ENCODE measurements at regions of chr9 and their contacts with region 1.

Region 1: DNA sequence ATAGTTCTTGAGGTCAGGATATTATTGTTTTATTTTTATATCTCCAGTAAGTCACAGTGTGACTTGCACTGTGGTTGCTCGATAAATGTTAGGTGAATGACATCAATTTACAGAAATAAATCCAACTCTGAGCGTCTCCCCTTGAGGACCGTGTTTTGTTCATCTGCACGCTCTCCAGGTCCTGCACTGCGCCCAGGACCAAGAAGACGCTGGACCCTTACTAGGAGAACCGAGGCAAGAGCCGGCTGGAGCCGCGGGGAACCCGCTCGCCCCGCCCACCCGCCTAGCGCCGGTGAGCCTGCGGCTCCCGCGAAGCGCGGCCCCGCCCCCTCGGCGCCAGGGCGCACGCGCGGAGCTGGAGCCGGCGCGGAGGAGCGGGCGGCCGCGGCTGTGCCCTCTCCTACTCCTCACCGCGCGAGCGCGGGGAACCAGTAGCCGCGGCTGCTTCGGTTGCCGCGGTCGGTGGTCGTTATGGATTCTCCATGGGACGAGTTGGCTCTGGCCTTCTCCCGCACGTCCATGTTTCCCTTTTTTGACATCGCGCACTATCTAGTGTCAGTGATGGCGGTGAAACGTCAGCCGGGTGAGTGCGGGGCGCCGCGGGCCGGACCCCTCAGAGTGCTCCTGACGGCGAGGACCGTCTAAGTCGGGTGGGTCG is at the start of gene TMEM38B:
- DNase-seq: peak; percentile 77
- H3K4me3 Mint-ChIP-seq: peak within 1 kb of the TSS; percentile 87
- H3K27ac Mint-ChIP-seq: peak within 1 kb of the TSS; percentile 61
- H3K4me1 Mint-ChIP-seq: peaks cover 26% of the 10 kb centered on the region
- H3K27me3 Mint-ChIP-seq: peaks cover 24% of the 10 kb centered on the region
- total RNA-seq, gene TMEM38B: 11.9 and 13.8 TPM in 2 replicates

Region 2: DNA sequence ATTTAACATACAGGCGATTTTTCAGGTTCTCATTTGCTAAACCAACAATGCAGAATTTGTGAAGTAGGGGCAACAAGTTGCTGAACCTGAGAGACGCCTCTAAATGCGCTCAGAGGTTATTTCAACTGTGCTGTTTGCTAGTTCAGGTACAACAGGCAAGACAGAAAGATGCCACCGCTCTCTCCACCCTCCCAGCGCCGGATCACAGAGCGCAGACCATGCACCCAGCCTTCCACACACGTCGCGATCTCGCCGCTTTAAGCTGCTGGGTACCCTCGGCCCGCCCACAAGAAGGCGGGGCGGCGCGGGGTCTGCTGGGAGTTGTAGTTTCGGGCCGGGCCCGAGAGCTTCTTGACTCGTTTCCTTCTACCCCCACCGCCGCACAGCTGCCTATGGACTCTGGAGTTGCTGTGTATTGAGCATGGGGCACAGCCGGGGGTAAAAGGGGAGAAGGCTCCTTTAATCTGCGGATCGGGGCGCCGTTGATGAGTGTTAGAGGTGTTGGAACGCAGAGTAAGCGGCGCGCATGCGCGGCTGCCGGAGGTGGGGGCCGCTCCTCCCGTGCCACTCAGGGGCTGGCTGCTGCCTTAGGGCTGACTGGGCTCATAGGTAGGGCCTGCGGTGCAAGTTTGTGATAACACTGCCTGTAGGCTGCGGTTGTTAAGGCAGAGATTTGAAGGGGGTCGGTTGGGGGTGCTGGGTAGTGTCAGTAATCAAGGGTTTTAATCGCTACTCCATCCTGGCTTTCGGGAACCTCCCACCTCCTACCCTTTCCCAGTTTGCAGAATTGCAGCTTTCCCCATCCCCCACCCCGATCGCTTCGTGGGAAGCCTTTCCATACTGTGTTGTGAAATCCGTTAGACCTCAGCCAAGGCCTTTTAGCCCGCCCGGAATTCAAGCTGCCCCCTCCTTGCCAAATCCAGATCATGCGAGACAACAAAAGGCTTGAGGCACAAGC is 726.0 kb before region 1 on chr9:
- intact Hi-C with region 1: loop called (anchors 10 kb)
- DNase-seq: peak; percentile 84
- H3K4me3 Mint-ChIP-seq: peak overlapping the region; percentile 92
- H3K27ac Mint-ChIP-seq: peak overlapping the region; percentile 66
- H3K4me1 Mint-ChIP-seq: peaks cover 13% of the 10 kb centered on the region
- H3K27me3 Mint-ChIP-seq: peaks cover 21% of the 10 kb centered on the region

Region 3: DNA sequence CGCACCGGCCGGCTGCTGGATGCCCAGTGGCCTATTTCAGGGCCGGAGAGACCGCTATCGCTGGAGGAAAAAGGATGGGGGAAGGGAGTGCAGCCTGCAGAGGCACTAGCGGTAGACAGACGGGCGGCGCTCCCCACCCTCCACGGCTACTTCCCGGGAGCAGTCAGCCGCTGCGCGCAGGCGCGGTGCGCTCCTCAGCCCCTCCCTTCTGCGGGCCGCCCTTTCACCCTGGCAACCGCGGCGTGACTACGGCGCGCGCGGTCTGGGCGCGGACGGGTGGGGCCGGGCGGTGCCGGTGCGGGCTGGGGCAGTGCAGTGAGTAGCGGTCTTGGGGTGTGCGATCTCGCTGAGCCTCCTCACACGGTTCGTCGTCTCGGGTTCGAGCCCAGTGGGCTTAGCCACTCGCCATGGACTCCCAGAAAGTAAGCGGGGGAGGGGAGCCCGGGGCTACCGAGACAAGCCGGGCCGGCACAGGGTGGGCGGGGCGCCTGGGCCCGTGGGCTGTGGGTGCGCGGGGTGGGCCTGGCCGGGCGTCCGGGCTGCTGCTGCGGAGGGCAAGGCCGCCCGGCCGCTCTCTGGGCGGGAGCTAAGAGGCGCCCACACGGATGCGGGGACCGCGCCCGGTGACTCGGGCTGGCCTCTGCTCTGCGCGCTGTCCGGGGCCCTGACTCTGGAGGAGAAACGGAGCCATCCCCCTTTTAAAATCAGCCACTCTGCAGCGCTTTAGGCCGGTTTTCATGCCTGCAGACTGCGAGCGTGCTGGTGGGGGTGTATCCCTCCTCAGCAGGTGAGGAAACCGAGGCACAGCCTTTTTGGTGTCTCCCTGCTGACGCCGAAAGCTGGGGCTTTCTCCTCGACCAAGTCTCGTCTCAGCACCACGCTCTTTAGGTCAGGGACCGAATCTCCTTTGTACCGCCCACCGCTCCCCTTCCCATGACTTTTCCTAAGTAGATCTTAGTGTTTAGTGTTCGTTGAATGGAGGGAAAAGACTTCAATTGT is 246.2 kb before region 1 on chr9 and contains the start of gene FSD1L:
- intact Hi-C with region 1: loop called (anchors 1 kb)
- DNase-seq: peak; percentile 80
- H3K4me3 Mint-ChIP-seq: peak within 1 kb of the TSS; percentile 87
- H3K27ac Mint-ChIP-seq: peak within 1 kb of the TSS; percentile 75
- H3K4me1 Mint-ChIP-seq: peaks cover 17% of the 10 kb centered on the region
- H3K27me3 Mint-ChIP-seq: peaks cover 9% of the 10 kb centered on the region
- total RNA-seq, gene FSD1L: 3.4 and 3.5 TPM in 2 replicates

Region 4: GRCh38 chr9:105557771-105558610 is 136.3 kb before region 1 on chr9 and contains the start of gene FKTN:
- intact Hi-C with region 1: loop called (anchors 1 kb)
- DNase-seq: peak; percentile 76
- H3K4me3 Mint-ChIP-seq: peak within 1 kb of the TSS; percentile 94
- H3K27ac Mint-ChIP-seq: peak within 1 kb of the TSS; percentile 71
- H3K4me1 Mint-ChIP-seq: peaks cover 22% of the 10 kb centered on the region
- H3K27me3 Mint-ChIP-seq: no peaks in the 10 kb centered on the region
- total RNA-seq, gene FKTN: 12.4 and 12.6 TPM in 2 replicates

Region 5: GRCh38 chr9:105656131-105656921 is 38.0 kb before region 1 on chr9:
- intact Hi-C with region 1: loop called (anchors 1 kb)
- DNase-seq: no peak
- H3K4me3 Mint-ChIP-seq: peak overlapping the region; percentile 71
- H3K27ac Mint-ChIP-seq: no peak overlapping the region
- H3K4me1 Mint-ChIP-seq: peaks cover 8% of the 10 kb centered on the region
- H3K27me3 Mint-ChIP-seq: peaks cover 37% of the 10 kb centered on the region

Region 6: DNA sequence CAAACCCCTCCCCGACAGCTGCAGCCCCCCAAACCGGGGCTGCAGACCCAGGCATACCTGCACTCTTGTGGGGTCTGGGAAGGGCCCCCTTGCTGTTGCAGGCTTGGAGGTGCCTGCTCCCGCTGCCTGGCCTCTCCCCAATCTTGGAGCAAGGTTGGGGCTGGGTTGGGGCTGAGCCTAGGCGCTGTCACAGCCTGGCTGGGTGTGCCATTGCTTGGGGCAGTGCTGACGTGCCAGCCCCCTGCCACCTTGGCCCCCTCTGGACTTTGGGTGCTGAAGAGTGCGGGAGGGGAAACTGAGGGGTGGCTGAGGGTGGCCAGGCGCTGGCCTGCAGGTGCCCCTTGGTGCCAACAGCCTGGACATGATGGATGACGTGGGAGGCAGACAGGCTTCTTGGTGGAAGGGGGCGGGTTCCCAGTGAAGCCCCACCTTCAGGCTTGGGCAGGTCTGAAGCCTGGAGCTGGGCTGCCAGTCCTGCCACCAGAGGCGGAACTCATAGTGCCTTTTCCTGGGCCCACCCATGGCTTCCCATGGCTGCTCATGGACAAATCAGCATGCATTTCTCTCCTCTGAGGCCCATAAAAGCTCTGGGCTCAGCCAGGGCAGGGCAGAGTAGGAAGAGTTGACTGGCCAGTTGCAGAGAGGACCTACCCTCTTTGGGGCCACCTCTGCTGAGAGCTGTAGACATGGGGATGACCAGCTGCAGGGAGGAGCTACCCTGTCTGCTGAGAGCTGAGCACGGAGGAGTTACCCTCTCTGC is 19.1 kb after region 1 on chr9:
- intact Hi-C with region 1: loop called (anchors 1 kb)
- DNase-seq: no peak
- H3K4me3 Mint-ChIP-seq: no peak overlapping the region
- H3K27ac Mint-ChIP-seq: no peak overlapping the region
- H3K4me1 Mint-ChIP-seq: peaks cover 5% of the 10 kb centered on the region
- H3K27me3 Mint-ChIP-seq: no peaks in the 10 kb centered on the region

Measured in activated T-helper 1 cell treated with anti-CD3 and anti-CD28 coated beads, Interleukin-12 subunit alpha, Interleukin-12 subunit beta, Interleukin-2, Interleukin-4 antibody, amounts not matched to agents 30 ng/mL and 10 ng/mL and 1 ng/mL, durations not matched to agents 14 hours and 24 hours and 36 hours (primary cell).